CD8-positive, alpha-beta T cell (primary cell): ENCODE measurements at regions of chr3 and their contacts with region 1.

Region 1: GRCh38 chr3:71369701-71370391 is 213.7 kb downstream of the FOXP1 start:
- DNase-seq: no peak
- ATAC-seq: no peak
- H3K4me3 ChIP-seq: no peak overlapping the region
- H3K4me3 Mint-ChIP-seq: no peak overlapping the region
- H3K27ac ChIP-seq: no peak overlapping the region
- H3K27ac Mint-ChIP-seq: peak overlapping the region; percentile 76
- H3K4me1 ChIP-seq: peaks cover 72% of the 10 kb centered on the region
- H3K4me1 Mint-ChIP-seq: peaks cover 84% of the 10 kb centered on the region
- H3K27me3 ChIP-seq: no peaks in the 10 kb centered on the region
- H3K27me3 Mint-ChIP-seq: no peaks in the 10 kb centered on the region
- CTCF ChIP-seq: no peak

Region 2: DNA sequence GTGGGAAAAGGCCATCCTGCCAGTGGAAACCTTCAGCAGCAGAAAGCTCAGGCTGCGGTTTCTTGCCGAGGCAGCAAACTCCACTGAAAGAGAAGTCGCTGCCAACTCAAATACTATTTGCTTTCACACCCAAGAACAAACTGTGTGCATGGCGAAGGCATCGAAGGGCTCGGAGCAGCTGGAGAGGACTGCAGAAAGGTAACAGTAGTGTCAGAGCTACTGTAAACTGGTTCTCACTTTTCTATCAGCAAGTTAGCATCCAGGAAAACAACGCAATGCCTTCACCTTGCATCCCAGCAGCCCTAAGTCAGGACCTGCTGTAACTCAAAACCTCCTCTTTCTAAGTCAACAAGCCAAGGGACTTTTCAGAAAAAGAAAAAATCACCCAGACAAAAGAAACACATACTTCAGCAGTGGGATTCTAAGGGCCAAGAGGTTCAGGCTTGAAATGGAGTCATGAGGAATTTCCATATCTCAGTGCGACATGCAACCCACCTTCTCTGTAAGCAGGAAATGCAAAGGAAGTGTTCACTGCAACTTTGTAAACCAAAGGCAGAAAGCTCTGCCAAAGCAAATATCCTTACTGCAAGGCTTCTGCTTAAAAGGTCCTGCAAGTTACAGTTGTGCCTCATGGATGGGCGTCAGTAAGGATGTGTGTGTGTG is 20.2 kb after region 1 on chr3:
- CTCF ChIA-PET with region 1: interaction called, 5 read pairs
- POLR2A ChIA-PET with region 1: interaction called, 4 read pairs
- intact Hi-C with region 1: loop called in 1 of 2 experiments (anchors 2 kb)
- DNase-seq: peak in 8 of 9 experiments; percentile 12 to 75 (median 34)
- ATAC-seq: peak; percentile 43
- H3K4me3 ChIP-seq: peak overlapping the region; percentile 13 to 30
- H3K4me3 Mint-ChIP-seq: peak overlapping the region; percentile 79
- H3K27ac ChIP-seq: peak overlapping the region; percentile 50 to 63
- H3K27ac Mint-ChIP-seq: peak overlapping the region; percentile 95
- H3K4me1 ChIP-seq: peaks cover 68% of the 10 kb centered on the region
- H3K4me1 Mint-ChIP-seq: peaks cover 77% of the 10 kb centered on the region
- H3K27me3 ChIP-seq: no peaks in the 10 kb centered on the region
- H3K27me3 Mint-ChIP-seq: no peaks in the 10 kb centered on the region
- CTCF ChIP-seq: no peak

Region 3: DNA sequence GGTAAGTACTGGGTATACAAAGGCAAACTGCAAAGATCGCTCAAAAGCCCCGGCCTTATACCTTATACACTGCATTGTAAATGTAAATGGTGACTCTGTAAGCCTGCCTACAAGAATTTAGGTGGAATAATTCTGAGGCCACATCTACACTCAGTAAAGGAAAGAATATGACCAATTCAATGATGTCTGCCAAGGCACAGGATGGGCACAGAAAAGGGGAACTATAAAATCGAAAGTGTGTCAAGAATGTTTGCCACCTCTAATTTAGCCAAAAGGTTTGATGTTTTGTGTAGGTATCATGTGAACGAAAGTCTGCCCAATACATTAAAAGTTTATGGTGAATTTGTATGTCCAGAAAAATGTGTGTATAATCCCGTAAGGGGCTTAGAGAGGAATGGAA is 117.6 kb after region 1 on chr3:
- CTCF ChIA-PET with region 1: no interaction called
- POLR2A ChIA-PET with region 1: interaction called, 3 read pairs
- intact Hi-C with region 1: loop called in 1 of 2 experiments (anchors 5 kb)
- DNase-seq: peak in 1 of 9 experiments; percentile 56
- ATAC-seq: no peak
- H3K4me3 ChIP-seq: peak overlapping the region in 1 of 2 experiments; percentile 33
- H3K4me3 Mint-ChIP-seq: peak overlapping the region; percentile 76
- H3K27ac ChIP-seq: peak overlapping the region; percentile 71 to 92
- H3K27ac Mint-ChIP-seq: peak overlapping the region; percentile 95
- H3K4me1 ChIP-seq: peaks cover 97% of the 10 kb centered on the region
- H3K4me1 Mint-ChIP-seq: peaks cover 84% of the 10 kb centered on the region
- H3K27me3 ChIP-seq: no peaks in the 10 kb centered on the region
- H3K27me3 Mint-ChIP-seq: no peaks in the 10 kb centered on the region
- CTCF ChIP-seq: no peak